WTC11 (cell line): ENCODE measurements at regions of chr7 and their contacts with region 1.

Region 1: GRCh38 chr7:29189743-29190201 is 4.8 kb upstream of the CHN2 start:
- DNase-seq: peak; percentile 97
- ATAC-seq: peak; percentile 87
- H3K4me3 Mint-ChIP-seq: peak overlapping the region; percentile 46
- H3K27ac Mint-ChIP-seq: peak overlapping the region; percentile 45; the same call in 1 of the 2 replicates
- H3K4me1 Mint-ChIP-seq: peaks cover 46% of the 10 kb centered on the region
- H3K27me3 Mint-ChIP-seq: peaks cover 48% of the 10 kb centered on the region
- CTCF ChIP-seq: peak; percentile 87

Region 2: GRCh38 chr7:28123752-28124151 is 1066.0 kb before region 1 on chr7:
- CTCF ChIA-PET with region 1: no interaction called
- POLR2A ChIA-PET with region 1: no interaction called
- DNase-seq: no peak
- ATAC-seq: no peak
- H3K4me3 Mint-ChIP-seq: no peak overlapping the region
- H3K27ac Mint-ChIP-seq: no peak overlapping the region
- H3K4me1 Mint-ChIP-seq: peaks cover 39% of the 10 kb centered on the region
- H3K27me3 Mint-ChIP-seq: peaks cover 58% of the 10 kb centered on the region
- CTCF ChIP-seq: no peak

Region 3: GRCh38 chr7:28389504-28390395 is 800.0 kb before region 1 on chr7:
- CTCF ChIA-PET with region 1: no interaction called
- POLR2A ChIA-PET with region 1: no interaction called
- DNase-seq: no peak
- ATAC-seq: peak; percentile 38
- H3K4me3 Mint-ChIP-seq: peak overlapping the region; percentile 52
- H3K27ac Mint-ChIP-seq: no peak overlapping the region
- H3K4me1 Mint-ChIP-seq: peaks cover 5% of the 10 kb centered on the region
- H3K27me3 Mint-ChIP-seq: no peaks in the 10 kb centered on the region
- CTCF ChIP-seq: peak; percentile 77

Region 4: DNA sequence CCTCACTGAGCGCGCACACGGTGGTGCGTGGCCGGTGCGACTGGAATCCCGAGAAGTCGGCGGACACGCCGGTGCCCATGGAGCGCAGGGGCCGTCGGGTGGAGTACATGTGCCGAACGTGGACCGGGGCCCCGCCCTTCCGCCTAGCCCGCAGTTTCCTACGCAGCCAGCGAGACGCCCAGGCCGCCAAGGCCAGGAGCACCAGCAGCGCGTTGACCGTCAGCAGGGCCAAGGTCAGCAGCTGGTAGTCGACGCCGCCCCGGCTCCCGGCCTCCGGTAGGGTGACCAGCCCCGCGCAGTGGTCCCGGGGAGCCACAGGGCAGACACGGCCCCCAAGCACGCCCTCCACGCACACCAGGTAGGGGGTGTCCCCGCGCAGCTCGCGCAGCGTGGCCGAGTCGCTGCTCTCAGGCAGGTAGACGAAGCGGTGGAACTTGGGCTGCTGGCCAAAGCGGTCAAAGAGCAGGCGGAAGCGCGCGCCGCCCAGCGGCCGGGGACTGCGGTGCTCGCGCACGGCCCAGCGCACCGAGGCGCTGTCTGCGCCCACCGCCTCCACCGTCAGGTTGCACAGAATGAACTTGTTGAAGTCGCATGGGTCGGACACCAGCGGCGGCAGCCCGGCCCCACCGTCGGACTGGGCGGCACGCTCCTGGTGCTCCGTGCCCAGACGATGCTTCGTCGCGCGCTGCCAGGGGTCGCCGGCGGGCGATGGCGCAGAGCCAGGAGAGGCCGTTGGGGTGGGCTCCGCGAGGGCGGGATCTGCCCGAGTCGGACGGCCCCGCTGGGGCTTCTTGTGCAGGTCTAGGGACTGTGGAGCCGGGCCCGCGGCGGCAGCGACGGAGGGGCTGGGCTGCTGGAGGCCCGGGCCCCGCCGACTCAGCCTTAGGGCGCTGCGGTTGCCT is 233.8 kb before region 1 on chr7:
- CTCF ChIA-PET with region 1: interaction called, 34 read pairs
- POLR2A ChIA-PET with region 1: interaction called, 5 read pairs
- DNase-seq: peak; percentile 86
- ATAC-seq: peak; percentile 56
- H3K4me3 Mint-ChIP-seq: peak overlapping the region; percentile 59
- H3K27ac Mint-ChIP-seq: no peak overlapping the region
- H3K4me1 Mint-ChIP-seq: peaks cover 45% of the 10 kb centered on the region
- H3K27me3 Mint-ChIP-seq: peaks cover 57% of the 10 kb centered on the region
- CTCF ChIP-seq: 0 out of 2 replicates have a peak, but pooled peaks have one; percentile 25

Region 5: GRCh38 chr7:29063236-29063635 is 126.5 kb before region 1 on chr7:
- CTCF ChIA-PET with region 1: no interaction called
- POLR2A ChIA-PET with region 1: no interaction called
- DNase-seq: no peak
- ATAC-seq: no peak
- H3K4me3 Mint-ChIP-seq: no peak overlapping the region
- H3K27ac Mint-ChIP-seq: no peak overlapping the region
- H3K4me1 Mint-ChIP-seq: peaks cover 7% of the 10 kb centered on the region
- H3K27me3 Mint-ChIP-seq: no peaks in the 10 kb centered on the region
- CTCF ChIP-seq: no peak

Region 6: GRCh38 chr7:29146057-29146706 is 43.6 kb before region 1 on chr7 and contains the start of gene CPVL:
- CTCF ChIA-PET with region 1: interaction called, 31 read pairs
- POLR2A ChIA-PET with region 1: no interaction called
- DNase-seq: peak; percentile 65
- ATAC-seq: peak; percentile 94
- H3K4me3 Mint-ChIP-seq: peak within 1 kb of the TSS; percentile 96
- H3K27ac Mint-ChIP-seq: 0 out of 2 replicates have a peak within 1 kb of the TSS, but pooled peaks have one; percentile 26
- H3K4me1 Mint-ChIP-seq: peaks cover 19% of the 10 kb centered on the region
- H3K27me3 Mint-ChIP-seq: peaks cover 13% of the 10 kb centered on the region
- CTCF ChIP-seq: no peak
- total RNA-seq, gene CPVL: 34.2 to 43.8 TPM (median 42.6 TPM) in 3 replicates

Region 7: DNA sequence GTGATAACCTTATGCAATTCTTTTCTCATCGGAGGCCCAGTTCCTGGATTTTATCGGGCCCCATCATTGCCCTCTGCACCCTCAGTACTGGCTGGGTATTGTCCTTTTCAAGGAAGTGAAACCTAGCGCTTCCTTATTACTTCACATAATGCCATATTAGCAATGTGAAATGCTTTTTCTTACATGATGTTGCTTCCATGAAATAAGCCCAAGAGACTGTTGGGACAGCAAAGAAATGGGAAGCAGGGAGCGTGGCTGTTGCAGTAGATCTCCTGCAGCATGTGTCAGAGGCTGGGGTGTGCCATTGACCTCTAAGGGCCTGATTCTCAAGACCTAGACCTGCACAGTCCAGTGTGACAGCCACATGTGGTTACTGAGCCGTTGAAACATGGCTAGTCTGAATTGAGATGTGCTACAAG is 12.9 kb after region 1 on chr7:
- CTCF ChIA-PET with region 1: interaction called, 18 read pairs
- POLR2A ChIA-PET with region 1: no interaction called
- DNase-seq: no peak
- ATAC-seq: no peak
- H3K4me3 Mint-ChIP-seq: no peak overlapping the region
- H3K27ac Mint-ChIP-seq: no peak overlapping the region
- H3K4me1 Mint-ChIP-seq: peaks cover 18% of the 10 kb centered on the region
- H3K27me3 Mint-ChIP-seq: peaks cover 23% of the 10 kb centered on the region
- CTCF ChIP-seq: no peak

Region 8: GRCh38 chr7:29297194-29297890 is 107.6 kb after region 1 on chr7:
- CTCF ChIA-PET with region 1: interaction called, 35 read pairs
- POLR2A ChIA-PET with region 1: interaction called, 3 read pairs
- DNase-seq: peak; percentile 81
- ATAC-seq: peak; percentile 45
- H3K4me3 Mint-ChIP-seq: peak overlapping the region; percentile 5; the same call in 1 of the 2 replicates
- H3K27ac Mint-ChIP-seq: no peak overlapping the region
- H3K4me1 Mint-ChIP-seq: peaks cover 80% of the 10 kb centered on the region
- H3K27me3 Mint-ChIP-seq: no peaks in the 10 kb centered on the region
- CTCF ChIP-seq: peak; percentile 71

Region 9: DNA sequence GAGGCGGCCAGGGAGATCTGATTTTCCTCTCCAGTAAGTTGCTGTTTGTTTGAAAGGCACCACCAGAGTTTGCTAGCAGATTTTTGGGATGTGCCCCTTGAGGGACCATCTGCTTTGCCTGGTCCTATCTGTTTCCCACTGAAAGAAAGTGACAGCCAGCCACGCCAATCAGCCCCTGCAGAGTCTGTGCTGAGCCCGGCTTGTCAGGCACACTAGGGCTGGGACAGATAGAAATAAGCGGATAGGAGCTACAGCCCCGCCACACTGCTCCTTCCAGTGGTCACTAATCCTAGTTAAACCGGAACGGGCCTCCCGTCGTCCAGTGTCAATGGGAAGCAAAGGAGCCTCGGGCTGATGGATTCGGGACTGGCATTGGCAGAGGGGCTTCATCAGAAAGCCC is 212.0 kb after region 1 on chr7:
- CTCF ChIA-PET with region 1: interaction called, 17 read pairs
- POLR2A ChIA-PET with region 1: no interaction called
- DNase-seq: no peak
- ATAC-seq: peak; percentile 20; the same call in 1 of the 2 replicates
- H3K4me3 Mint-ChIP-seq: no peak overlapping the region
- H3K27ac Mint-ChIP-seq: no peak overlapping the region
- H3K4me1 Mint-ChIP-seq: peaks cover 8% of the 10 kb centered on the region
- H3K27me3 Mint-ChIP-seq: no peaks in the 10 kb centered on the region
- CTCF ChIP-seq: no peak

Region 10: DNA sequence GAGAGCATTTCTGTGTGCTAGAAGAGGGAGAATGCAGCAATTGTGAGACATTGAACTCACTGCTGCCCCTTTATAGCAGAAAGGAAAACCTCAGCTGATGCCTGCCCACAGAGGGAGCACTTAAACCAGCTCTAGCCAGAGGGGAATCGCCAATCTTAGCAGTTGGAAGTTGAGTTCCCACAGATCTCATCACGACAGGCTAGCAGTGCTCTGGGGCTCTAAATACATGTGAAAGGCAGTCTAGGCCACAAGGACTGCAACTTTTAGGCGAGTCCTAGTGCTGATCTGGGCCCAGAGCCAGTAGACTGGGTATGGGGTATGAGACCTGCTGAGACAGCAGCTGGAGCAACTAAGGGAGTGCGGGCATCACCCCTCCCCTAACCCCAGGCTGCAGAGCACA is 348.6 kb after region 1 on chr7:
- CTCF ChIA-PET with region 1: no interaction called
- POLR2A ChIA-PET with region 1: no interaction called
- DNase-seq: peak; percentile 25
- ATAC-seq: peak; percentile 94
- H3K4me3 Mint-ChIP-seq: no peak overlapping the region
- H3K27ac Mint-ChIP-seq: peak overlapping the region; percentile 54; the same call in 1 of the 2 replicates
- H3K4me1 Mint-ChIP-seq: peaks cover 8% of the 10 kb centered on the region
- H3K27me3 Mint-ChIP-seq: no peaks in the 10 kb centered on the region
- CTCF ChIP-seq: no peak